K562 (cell line): ENCODE measurements at regions of chr9 and their contacts with region 1.

Region 1: GRCh38 chr9:105608721-105609598 is 51.0 kb downstream of the FKTN start:
- DNase-seq: peak; percentile 44 to 69 (median 52)
- ATAC-seq: peak; percentile 88
- H3K4me3 ChIP-seq: no peak overlapping the region
- H3K27ac ChIP-seq: no peak overlapping the region
- H3K4me1 ChIP-seq: no peaks in the 10 kb centered on the region
- H3K27me3 ChIP-seq: no peaks in the 10 kb centered on the region
- CTCF ChIP-seq: peak; percentile 34 to 78 (median 59); a peak in 4 of 6 replicates
- EP300 ChIP-seq: no peak
- POLR2A ChIP-seq: no peak
- RAD21 ChIP-seq: peak; percentile 84 to 85

Region 2: GRCh38 chr9:105647595-105648349 is 38.8 kb after region 1 on chr9:
- CTCF ChIA-PET with region 1: no interaction called
- POLR2A ChIA-PET with region 1: no interaction called
- in situ Hi-C with region 1: no loop called
- intact Hi-C with region 1: no loop called
- DNase-seq: peak; percentile 77 to 90 (median 80)
- ATAC-seq: peak; percentile 85
- H3K4me3 ChIP-seq: peak overlapping the region; percentile 12; the same call in 1 of the 2 replicates
- H3K27ac ChIP-seq: peak overlapping the region; percentile 81
- H3K4me1 ChIP-seq: peaks cover 18 to 35% of the 10 kb centered on the region in 2 experiments; a peak in 4 of 5 replicates
- H3K27me3 ChIP-seq: no peaks in the 10 kb centered on the region
- CTCF ChIP-seq: no peak; a peak in 1 of 6 replicates
- EP300 ChIP-seq: peak; percentile 98
- POLR2A ChIP-seq: no peak
- RAD21 ChIP-seq: 0 out of 4 replicates have a peak, but pooled peaks of 1 of the 2 experiments have one; percentile 4

Region 3: DNA sequence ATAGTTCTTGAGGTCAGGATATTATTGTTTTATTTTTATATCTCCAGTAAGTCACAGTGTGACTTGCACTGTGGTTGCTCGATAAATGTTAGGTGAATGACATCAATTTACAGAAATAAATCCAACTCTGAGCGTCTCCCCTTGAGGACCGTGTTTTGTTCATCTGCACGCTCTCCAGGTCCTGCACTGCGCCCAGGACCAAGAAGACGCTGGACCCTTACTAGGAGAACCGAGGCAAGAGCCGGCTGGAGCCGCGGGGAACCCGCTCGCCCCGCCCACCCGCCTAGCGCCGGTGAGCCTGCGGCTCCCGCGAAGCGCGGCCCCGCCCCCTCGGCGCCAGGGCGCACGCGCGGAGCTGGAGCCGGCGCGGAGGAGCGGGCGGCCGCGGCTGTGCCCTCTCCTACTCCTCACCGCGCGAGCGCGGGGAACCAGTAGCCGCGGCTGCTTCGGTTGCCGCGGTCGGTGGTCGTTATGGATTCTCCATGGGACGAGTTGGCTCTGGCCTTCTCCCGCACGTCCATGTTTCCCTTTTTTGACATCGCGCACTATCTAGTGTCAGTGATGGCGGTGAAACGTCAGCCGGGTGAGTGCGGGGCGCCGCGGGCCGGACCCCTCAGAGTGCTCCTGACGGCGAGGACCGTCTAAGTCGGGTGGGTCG is 85.4 kb after region 1 on chr9 and contains the start of gene TMEM38B:
- CTCF ChIA-PET with region 1: no interaction called
- POLR2A ChIA-PET with region 1: no interaction called
- in situ Hi-C with region 1: no loop called
- intact Hi-C with region 1: loop called (anchors 1 kb)
- DNase-seq: peak; percentile 88 to 96 (median 94)
- ATAC-seq: peak; percentile 85
- H3K4me3 ChIP-seq: peak within 1 kb of the TSS; percentile 77
- H3K27ac ChIP-seq: peak within 1 kb of the TSS; percentile 77
- H3K4me1 ChIP-seq: peaks cover 6 to 19% of the 10 kb centered on the region in 2 experiments; a peak in 4 of 5 replicates
- H3K27me3 ChIP-seq: no peaks in the 10 kb centered on the region
- CTCF ChIP-seq: no peak
- EP300 ChIP-seq: no peak
- POLR2A ChIP-seq: peak; percentile 78
- RAD21 ChIP-seq: no peak
- polyA plus RNA-seq, gene TMEM38B: 42.0 to 57.5 TPM

Region 4: GRCh38 chr9:105712773-105713172 is 103.8 kb after region 1 on chr9:
- CTCF ChIA-PET with region 1: interaction called, 16 read pairs
- POLR2A ChIA-PET with region 1: no interaction called
- in situ Hi-C with region 1: loop called (anchors 10 kb)
- intact Hi-C with region 1: no loop called
- DNase-seq: no peak
- ATAC-seq: no peak
- H3K4me3 ChIP-seq: no peak overlapping the region
- H3K27ac ChIP-seq: no peak overlapping the region
- H3K4me1 ChIP-seq: peaks cover 0 to 14% of the 10 kb centered on the region in 2 experiments; a peak in 1 of 5 replicates
- H3K27me3 ChIP-seq: no peaks in the 10 kb centered on the region
- CTCF ChIP-seq: no peak
- EP300 ChIP-seq: no peak
- POLR2A ChIP-seq: no peak
- RAD21 ChIP-seq: no peak

Region 5: DNA sequence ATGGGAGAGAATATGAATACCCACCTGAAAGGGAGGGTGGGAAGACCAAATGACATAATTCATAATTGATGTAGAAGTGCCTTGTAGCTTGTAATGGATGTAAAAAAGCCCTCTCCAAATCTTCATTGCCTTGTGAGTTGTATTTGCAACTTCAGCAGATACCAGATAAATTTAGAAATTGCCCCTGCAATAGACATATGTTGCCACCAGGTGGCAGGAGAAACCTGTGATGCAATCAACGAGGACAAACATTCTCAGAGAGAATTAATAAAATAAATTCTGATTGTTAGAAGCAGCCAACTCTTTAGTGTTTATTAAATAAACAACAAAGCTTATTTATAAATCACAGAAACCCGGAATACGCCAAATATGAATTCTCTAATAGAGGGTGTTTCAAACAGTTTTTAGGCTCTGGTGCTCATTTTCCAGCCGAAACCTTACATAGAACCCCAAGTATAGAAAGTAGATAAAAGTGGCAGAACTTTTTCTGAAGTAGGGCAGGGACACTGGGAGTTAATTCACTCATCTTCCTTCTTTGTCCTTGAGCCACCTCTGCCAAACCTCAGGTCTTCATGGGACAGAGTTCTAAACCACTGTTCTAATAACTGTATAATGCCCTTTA is 233.2 kb after region 1 on chr9:
- CTCF ChIA-PET with region 1: no interaction called
- POLR2A ChIA-PET with region 1: no interaction called
- in situ Hi-C with region 1: loop called (anchors 25 kb)
- intact Hi-C with region 1: no loop called
- DNase-seq: peak; percentile 51 to 55 (median 51)
- ATAC-seq: peak; percentile 58; the same call in 1 of the 3 replicates
- H3K4me3 ChIP-seq: no peak overlapping the region
- H3K27ac ChIP-seq: no peak overlapping the region
- H3K4me1 ChIP-seq: no peaks in the 10 kb centered on the region
- H3K27me3 ChIP-seq: no peaks in the 10 kb centered on the region
- CTCF ChIP-seq: peak; percentile 69 to 90 (median 77)
- EP300 ChIP-seq: no peak
- POLR2A ChIP-seq: no peak
- RAD21 ChIP-seq: peak; percentile 95 to 96

Region 6: DNA sequence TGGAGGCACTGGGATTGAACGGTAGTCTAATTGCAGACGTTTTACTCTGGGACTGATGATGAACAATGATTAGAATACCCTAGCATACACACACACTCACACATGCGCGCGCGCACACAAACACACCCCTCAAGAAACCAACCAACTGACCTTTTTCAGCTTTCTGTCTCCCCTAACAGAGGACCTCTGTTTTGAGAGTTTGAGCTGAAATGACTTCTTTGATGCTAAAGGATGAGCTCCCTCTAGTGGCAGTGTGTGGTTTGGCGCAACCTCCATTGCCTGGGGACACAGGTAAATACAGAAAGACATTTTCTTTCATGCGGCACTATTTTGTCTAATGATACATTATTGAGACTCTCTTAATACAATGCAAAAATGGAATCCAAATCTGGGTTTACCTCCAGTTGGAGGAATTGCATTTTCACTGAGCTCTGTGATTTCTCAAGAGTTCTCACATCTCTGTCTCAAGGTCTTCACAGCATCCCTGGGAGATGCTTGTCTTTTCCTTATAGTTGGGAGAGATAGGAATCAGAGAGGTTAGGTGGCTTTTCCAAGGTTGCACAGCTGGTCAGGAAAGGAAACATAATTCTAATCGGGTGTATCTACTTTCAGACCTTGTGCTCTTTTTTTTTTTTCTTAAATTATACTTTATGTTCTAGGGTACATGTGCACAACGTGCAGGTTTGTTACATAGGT is 272.8 kb after region 1 on chr9:
- CTCF ChIA-PET with region 1: interaction called, 6 read pairs
- POLR2A ChIA-PET with region 1: no interaction called
- in situ Hi-C with region 1: no loop called
- intact Hi-C with region 1: loop called (anchors 1 kb)
- DNase-seq: peak; percentile 58 to 81 (median 62)
- ATAC-seq: peak; percentile 90
- H3K4me3 ChIP-seq: no peak overlapping the region
- H3K27ac ChIP-seq: no peak overlapping the region
- H3K4me1 ChIP-seq: peaks cover 0 to 14% of the 10 kb centered on the region in 2 experiments; a peak in 4 of 5 replicates
- H3K27me3 ChIP-seq: no peaks in the 10 kb centered on the region
- CTCF ChIP-seq: peak; percentile 78 to 93 (median 89)
- EP300 ChIP-seq: no peak
- POLR2A ChIP-seq: no peak
- RAD21 ChIP-seq: peak; percentile 80 to 92